ENCODE measurements at regions of chr3 and their contacts with region 1.

Region 1: DNA sequence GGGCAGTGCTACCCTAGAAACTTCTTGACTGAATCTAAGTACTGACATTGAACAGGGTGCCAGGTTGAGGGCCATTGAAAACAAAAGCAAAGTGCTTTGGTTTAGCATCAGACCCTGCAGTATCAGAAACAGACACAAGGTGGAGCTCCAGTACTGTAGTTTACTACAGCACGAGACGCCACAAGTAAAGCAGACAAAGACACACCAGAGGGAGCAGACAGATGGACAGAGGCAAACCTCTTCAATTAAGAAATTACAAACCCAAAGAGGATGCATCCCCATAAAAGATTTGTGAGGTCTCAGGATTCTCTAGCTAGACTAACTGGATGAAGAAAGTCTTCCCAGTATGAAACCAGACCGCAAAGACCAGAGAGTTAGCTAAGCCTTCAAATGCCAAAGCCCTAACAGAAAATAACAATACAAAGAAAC is 16.6 kb downstream of the TOP2B start:
- DNase-seq: peak; percentile 79
- H3K4me3 Mint-ChIP-seq: no peak overlapping the region
- H3K27ac Mint-ChIP-seq: no peak overlapping the region
- H3K4me1 Mint-ChIP-seq: peaks cover 21% of the 10 kb centered on the region
- H3K27me3 Mint-ChIP-seq: no peaks in the 10 kb centered on the region

Region 2: GRCh38 chr3:25633919-25634318 is 14.2 kb before region 1 on chr3:
- CTCF ChIA-PET with region 1: interaction called, 16 read pairs
- POLR2A ChIA-PET with region 1: no interaction called
- DNase-seq: no peak
- H3K4me3 Mint-ChIP-seq: no peak overlapping the region
- H3K27ac Mint-ChIP-seq: no peak overlapping the region
- H3K4me1 Mint-ChIP-seq: peaks cover 3% of the 10 kb centered on the region
- H3K27me3 Mint-ChIP-seq: no peaks in the 10 kb centered on the region

Region 3: GRCh38 chr3:25856902-25857518 is 208.9 kb after region 1 on chr3:
- CTCF ChIA-PET with region 1: interaction called, 105 read pairs
- POLR2A ChIA-PET with region 1: interaction called, 4 read pairs
- DNase-seq: no peak
- H3K4me3 Mint-ChIP-seq: no peak overlapping the region
- H3K27ac Mint-ChIP-seq: no peak overlapping the region
- H3K4me1 Mint-ChIP-seq: no peaks in the 10 kb centered on the region
- H3K27me3 Mint-ChIP-seq: no peaks in the 10 kb centered on the region